Activated CD4-positive, alpha-beta T cell treated with anti-CD3 and anti-CD28 coated beads, Interleukin-2, amount 10 ng/mL, durations not matched to agents 24 days and 14 days (primary cell): ENCODE measurements at regions of chr11 and their contacts with region 1.

Region 1: DNA sequence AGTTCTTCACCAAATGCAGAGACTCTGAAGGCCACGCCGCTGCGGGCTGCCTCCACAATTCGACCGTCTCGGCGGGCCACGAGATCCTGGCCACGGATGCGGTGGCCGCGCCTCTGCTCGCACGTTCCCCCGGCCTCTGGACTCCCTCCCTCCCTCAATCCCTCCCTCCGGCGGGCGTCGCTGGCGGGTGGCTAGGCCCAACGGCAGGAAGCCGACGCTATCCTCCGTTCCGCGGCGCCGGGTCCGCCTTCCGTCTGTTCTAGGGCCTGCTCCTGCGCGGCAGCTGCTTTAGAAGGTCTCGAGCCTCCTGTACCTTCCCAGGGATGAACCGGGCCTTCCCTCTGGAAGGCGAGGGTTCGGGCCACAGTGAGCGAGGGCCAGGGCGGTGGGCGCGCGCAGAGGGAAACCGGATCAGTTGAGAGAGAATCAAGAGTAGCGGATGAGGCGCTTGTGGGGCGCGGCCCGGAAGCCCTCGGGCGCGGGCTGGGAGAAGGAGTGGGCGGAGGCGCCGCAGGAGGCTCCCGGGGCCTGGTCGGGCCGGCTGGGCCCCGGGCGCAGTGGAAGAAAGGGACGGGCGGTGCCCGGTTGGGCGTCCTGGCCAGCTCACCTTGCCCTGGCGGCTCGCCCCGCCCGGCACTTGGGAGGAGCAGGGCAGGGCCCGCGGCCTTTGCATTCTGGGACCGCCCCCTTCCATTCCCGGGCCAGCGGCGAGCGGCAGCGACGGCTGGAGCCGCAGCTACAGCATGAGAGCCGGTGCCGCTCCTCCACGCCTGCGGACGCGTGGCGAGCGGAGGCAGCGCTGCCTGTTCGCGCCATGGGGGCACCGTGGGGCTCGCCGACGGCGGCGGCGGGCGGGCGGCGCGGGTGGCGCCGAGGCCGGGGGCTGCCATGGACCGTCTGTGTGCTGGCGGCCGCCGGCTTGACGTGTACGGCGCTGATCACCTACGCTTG is at the start of gene FUT4:
- DNase-seq: peak; percentile 93
- H3K4me3 Mint-ChIP-seq: peak within 1 kb of the TSS; percentile 99
- H3K27ac Mint-ChIP-seq: peak within 1 kb of the TSS; percentile 100
- H3K4me1 Mint-ChIP-seq: peaks cover 33% of the 10 kb centered on the region
- H3K27me3 Mint-ChIP-seq: peaks cover 6% of the 10 kb centered on the region
- total RNA-seq, gene FUT4: 8.3 and 8.8 TPM in 2 replicates

Region 2: DNA sequence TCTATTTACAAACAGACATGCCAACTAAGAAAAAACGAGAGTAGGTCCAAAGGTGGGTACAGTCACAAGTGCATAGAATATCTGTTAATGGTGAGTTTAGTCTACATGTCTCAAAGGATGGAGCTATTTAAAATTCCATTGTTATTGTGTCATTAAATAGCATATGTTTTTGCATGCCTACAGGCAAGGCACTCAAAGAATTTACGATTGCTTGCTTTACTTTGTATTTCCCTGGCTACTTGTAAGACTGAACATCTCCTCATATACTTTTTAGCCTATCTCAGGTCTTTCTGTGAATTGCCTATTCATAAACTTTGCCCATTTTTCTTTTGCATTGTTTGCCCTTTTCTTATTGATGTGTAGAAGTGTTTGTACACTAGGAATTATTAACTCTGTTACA is 1173.7 kb before region 1 on chr11:
- intact Hi-C with region 1: no loop called
- DNase-seq: no peak
- H3K4me3 Mint-ChIP-seq: no peak overlapping the region
- H3K27ac Mint-ChIP-seq: no peak overlapping the region
- H3K4me1 Mint-ChIP-seq: no peaks in the 10 kb centered on the region
- H3K27me3 Mint-ChIP-seq: no peaks in the 10 kb centered on the region

Region 3: DNA sequence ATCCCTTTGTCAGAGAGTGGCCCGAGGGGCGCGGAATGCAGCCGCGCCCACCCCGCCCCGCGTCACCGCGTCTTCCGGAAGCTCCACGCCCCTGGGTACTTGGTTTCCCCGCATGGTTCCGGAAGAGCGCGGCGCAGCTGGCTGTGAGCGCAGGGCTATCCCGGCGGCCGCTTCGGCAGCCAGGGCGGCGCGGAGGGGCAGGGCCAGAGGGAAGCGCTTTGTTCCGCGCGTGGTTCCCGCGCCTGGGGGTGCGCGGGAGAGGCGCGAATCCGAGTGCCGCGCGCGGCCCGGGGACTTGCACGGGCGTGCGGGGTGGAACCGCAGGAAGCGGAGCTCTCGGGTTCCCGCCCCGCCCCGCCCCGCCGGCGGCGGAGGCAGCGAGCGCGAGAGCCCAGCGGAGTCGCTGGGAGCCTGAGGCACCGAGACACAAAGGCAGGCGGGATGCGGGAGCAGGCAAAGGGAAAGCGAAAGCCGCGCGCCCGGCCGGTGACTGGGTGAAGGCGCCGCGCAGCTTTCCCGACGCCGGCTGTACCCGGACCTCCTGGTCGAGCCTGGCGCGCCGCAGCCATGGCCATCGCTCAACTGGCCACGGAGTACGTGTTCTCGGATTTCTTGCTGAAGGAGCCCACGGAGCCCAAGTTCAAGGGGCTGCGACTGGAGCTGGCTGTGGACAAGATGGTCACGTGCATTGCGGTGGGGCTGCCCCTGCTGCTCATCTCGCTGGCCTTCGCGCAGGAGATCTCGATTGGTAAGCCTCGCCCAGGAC is 415.0 kb before region 1 on chr11 and contains the start of gene PANX1:
- intact Hi-C with region 1: loop called (anchors 5 kb)
- DNase-seq: peak; percentile 94
- H3K4me3 Mint-ChIP-seq: no peak within 1 kb of the TSS
- H3K27ac Mint-ChIP-seq: peak within 1 kb of the TSS; percentile 88
- H3K4me1 Mint-ChIP-seq: peaks cover 21% of the 10 kb centered on the region
- H3K27me3 Mint-ChIP-seq: no peaks in the 10 kb centered on the region
- total RNA-seq, gene PANX1: 19.7 and 20.5 TPM in 2 replicates

Region 4: GRCh38 chr11:94493281-94494125 is 50.5 kb before region 1 on chr11 and contains the starts of genes ANKRD49 and MRE11:
- intact Hi-C with region 1: loop called (anchors 1 kb)
- DNase-seq: peak; percentile 99
- H3K4me3 Mint-ChIP-seq: peak within 1 kb of the TSS; percentile 96
- H3K27ac Mint-ChIP-seq: peak within 1 kb of the TSS; percentile 95
- H3K4me1 Mint-ChIP-seq: peaks cover 30% of the 10 kb centered on the region
- H3K27me3 Mint-ChIP-seq: no peaks in the 10 kb centered on the region
- total RNA-seq, gene ANKRD49: 18.4 and 22.6 TPM in 2 replicates
- total RNA-seq, gene MRE11: 45.4 and 46.5 TPM in 2 replicates

Region 5: GRCh38 chr11:94519478-94520084 is 24.4 kb before region 1 on chr11:
- intact Hi-C with region 1: loop called (anchors 2 kb)
- DNase-seq: peak; percentile 67
- H3K4me3 Mint-ChIP-seq: no peak overlapping the region
- H3K27ac Mint-ChIP-seq: no peak overlapping the region
- H3K4me1 Mint-ChIP-seq: no peaks in the 10 kb centered on the region
- H3K27me3 Mint-ChIP-seq: peaks cover 31% of the 10 kb centered on the region

Region 6: DNA sequence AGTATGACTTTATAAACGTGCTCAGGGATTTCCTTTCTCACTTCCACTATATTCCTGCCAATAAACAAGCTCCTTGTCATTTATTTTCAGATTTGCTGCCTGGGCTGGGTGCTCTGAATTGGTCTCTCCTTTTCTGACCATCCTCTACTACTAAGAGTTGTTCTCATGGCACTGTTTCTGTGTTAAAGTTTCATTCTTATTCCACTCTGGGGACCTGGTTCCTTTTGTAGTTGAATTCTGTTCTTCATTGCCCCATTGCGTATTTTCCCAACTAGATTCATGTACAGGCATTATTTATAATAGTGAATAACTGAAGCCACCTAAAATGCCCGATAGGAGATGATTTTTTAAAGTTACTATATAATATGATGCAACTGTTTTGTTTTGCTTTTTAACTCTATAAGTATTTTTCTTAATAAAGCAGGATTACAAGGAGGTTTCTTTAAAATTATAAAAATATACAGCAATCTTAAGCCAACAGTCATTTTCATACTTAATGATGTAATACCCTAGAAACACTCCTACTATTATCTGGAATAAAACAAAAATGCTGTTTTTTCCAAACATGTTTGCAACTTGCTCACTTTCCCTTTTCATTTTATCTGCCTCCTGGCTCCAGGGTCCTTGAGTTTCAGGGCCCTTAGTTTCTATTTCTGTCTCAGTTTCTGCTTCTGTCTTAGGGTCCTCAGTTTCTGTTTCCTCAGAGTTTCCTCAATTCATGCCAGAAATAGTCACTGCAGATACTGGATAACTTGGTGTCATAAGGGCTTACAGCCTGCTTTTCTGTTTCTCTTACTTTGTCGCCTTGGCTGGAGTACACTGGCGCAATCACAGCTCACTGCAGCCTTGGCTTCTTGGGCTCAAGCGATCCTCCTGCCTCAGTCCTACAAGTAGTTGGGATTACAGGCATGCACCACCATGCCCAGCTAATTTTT is 10.0 kb before region 1 on chr11:
- intact Hi-C with region 1: no loop called
- DNase-seq: no peak
- H3K4me3 Mint-ChIP-seq: no peak overlapping the region
- H3K27ac Mint-ChIP-seq: no peak overlapping the region
- H3K4me1 Mint-ChIP-seq: no peaks in the 10 kb centered on the region
- H3K27me3 Mint-ChIP-seq: peaks cover 45% of the 10 kb centered on the region

Region 7: DNA sequence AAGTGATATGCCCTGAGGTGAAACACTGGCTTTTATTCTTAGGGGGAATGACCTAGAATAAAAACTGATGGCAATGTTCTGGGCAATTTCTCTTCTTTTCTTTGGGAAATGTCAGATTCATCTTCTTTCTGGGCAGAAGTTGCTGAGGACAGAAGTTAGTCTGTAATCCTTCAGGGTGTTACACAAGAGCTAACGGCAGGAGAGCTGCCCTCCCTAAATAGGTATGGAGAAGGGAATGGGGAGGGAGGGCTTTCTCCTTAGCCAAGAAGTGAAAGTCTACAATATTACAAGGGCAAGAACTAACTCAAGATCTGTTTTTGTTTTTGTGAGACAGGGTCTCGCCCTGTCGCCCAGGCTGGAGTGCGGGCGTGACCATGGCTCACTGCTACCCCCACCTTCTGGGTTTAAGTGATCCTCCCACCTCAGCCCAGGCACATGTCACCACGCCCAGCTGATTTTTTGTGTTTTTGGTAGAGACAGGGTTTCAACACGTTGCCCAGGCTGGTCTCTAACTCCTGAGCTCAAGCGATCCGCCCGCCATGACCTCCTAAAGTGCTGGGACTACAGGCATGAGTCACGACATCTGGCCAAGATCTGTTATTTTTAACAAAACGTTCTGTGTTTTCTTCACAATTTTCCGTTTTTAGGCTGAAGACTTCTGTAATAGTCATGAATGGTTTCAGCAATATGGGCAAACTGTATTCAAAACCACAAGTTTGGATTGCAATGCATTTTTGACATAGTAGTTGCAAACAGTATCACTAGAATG is 30.4 kb after region 1 on chr11:
- intact Hi-C with region 1: no loop called
- DNase-seq: no peak
- H3K4me3 Mint-ChIP-seq: no peak overlapping the region
- H3K27ac Mint-ChIP-seq: no peak overlapping the region
- H3K4me1 Mint-ChIP-seq: no peaks in the 10 kb centered on the region
- H3K27me3 Mint-ChIP-seq: peaks cover 3% of the 10 kb centered on the region

Region 8: DNA sequence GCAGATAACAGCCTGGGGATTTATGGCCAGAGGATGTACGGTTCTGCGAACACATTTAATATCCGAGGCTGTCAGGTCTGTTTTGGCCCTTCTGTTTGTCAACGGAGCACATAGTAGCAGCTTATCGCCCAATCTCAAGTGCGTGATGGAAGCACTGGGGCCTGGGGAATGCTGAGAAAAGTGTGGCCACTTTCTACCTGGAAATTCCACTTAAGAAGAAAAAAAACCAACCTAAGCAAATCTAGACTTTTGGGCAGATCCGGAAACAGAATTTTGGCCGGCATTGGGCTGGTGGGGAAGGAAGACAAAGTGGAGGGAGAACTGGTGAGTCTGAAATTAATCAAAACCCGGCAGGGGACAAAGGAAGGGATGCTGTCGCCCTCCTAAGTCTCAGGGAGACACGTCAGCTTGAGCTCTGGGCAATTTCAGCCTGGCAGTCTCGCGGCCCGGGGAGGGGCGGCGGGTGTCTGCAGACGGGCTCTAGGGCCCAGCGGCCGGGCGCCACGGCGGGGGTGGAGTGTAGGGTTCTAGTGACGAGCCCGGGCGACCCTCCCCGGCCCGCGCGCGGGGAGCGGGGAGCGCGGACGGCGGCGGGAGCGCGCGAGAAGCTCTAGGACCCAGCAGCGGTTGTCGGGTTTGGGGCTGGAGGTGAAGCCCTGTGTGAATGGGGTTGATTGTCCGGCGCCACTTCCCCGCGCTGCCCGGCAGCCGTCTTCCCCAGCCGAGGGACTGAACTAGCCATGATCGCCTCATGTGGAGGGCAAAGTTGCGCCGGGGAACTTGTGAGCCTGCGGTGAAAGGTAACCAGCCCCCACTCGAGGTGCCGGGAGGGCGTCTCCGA is 224.0 kb after region 1 on chr11 and contains the start of gene AMOTL1:
- intact Hi-C with region 1: loop called (anchors 10 kb)
- DNase-seq: peak; percentile 83
- H3K4me3 Mint-ChIP-seq: peak within 1 kb of the TSS; percentile 84
- H3K27ac Mint-ChIP-seq: peak within 1 kb of the TSS; percentile 59
- H3K4me1 Mint-ChIP-seq: peaks cover 9% of the 10 kb centered on the region
- H3K27me3 Mint-ChIP-seq: peaks cover 47% of the 10 kb centered on the region
- total RNA-seq, gene AMOTL1: 5.4 and 5.9 TPM in 2 replicates

Region 9: GRCh38 chr11:94876645-94877442 is 332.9 kb after region 1 on chr11:
- intact Hi-C with region 1: loop called (anchors 10 kb)
- DNase-seq: peak; percentile 85
- H3K4me3 Mint-ChIP-seq: peak overlapping the region; percentile 51
- H3K27ac Mint-ChIP-seq: peak overlapping the region; percentile 83
- H3K4me1 Mint-ChIP-seq: peaks cover 21% of the 10 kb centered on the region
- H3K27me3 Mint-ChIP-seq: no peaks in the 10 kb centered on the region

Region 10: DNA sequence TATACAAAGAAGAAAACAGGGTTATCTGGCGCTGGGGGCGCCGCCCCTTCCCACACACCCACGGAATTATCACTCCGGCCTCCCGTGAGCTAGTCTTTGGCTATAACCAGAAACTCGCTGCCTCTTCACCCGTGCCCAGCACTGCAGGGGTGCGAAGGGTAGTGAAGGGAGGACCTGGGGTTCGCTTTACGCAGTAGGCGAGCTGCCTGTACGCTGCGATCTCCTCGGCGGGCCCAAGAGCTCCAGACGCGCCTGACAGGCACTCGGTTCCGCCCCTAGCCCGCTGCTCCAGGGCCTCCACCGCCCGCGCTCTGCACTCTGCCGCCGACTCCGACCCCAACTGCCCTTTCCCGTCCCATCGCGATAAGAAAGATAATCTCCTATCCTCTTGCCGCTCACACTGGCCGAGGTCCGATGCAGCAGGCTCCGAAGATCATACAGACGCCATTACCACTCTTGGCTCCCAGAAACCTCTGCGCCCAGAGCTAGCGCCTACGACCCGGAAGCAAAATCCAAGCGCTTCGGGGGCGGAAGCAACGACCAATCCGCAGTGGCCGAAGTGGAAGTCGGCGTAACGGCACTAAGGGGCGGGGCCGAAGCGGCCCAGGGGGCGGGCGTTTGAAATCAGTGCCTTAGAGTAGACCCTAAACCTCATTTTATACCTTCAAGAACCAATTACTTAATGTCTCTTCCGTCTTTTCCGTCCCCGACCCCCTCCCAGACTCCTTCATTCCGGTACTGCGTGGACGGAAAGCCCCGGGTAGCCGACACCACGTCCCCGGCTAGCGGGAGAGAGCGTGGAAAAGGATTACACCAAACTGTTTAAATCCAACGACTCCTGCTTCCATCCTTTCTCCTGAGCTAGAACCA is 429.4 kb after region 1 on chr11 and contains the starts of genes CWC15 and KDM4D:
- intact Hi-C with region 1: loop called (anchors 10 kb)
- DNase-seq: peak; percentile 98
- H3K4me3 Mint-ChIP-seq: peak within 1 kb of the TSS; percentile 94
- H3K27ac Mint-ChIP-seq: peak within 1 kb of the TSS; percentile 93
- H3K4me1 Mint-ChIP-seq: peaks cover 33% of the 10 kb centered on the region
- H3K27me3 Mint-ChIP-seq: no peaks in the 10 kb centered on the region
- total RNA-seq, gene CWC15: 87.6 and 96.2 TPM in 2 replicates
- total RNA-seq, gene KDM4D: 1.2 TPM in 2 replicates

Region 11: GRCh38 chr11:95605271-95605940 is 1061.4 kb after region 1 on chr11:
- intact Hi-C with region 1: no loop called
- DNase-seq: no peak
- H3K4me3 Mint-ChIP-seq: no peak overlapping the region
- H3K27ac Mint-ChIP-seq: no peak overlapping the region
- H3K4me1 Mint-ChIP-seq: peaks cover 14% of the 10 kb centered on the region
- H3K27me3 Mint-ChIP-seq: no peaks in the 10 kb centered on the region